OCI-LY7 (cell line): ENCODE measurements at regions of chr5 and their contacts with region 1.

Region 1: DNA sequence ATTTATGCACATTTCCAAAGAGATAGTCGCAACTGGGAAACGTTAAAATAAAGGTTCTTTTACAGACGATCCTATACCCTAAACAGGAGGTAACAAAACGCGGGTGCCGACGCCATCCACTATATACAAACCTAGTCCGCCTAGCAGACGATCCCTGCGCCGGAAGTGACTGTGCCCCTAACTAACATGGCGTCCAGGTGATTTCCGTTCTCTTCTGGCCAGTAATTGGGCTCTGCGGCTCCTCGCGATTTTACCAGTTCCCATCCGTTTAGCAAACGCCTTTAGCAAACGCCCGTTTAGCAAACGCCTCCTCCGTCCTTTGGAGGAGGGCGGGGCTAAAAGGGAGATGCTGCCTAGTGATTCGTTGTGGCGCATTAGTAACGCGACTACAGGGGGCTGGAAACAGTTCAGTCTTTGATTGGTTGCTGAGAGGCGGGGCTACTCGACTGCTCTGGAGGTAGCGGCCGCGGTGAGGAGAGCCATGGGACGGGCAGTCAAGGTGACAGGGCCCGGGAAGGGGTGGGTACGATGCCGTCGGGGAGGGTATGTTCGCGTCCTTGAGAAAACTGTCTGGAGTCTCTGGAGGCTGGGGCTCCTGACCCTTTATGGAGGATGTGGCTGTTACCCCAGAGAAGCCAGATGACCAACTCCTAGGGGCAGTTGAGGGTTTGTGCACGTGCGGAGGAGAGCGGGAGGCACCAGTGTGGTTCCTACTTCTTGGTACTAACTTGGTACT is at the start of gene LYRM7:
- DNase-seq: peak; percentile 100
- H3K4me3 ChIP-seq: peak within 1 kb of the TSS; percentile 79
- H3K27ac ChIP-seq: peak within 1 kb of the TSS; percentile 65
- H3K4me1 ChIP-seq: peaks cover 27% of the 10 kb centered on the region
- CTCF ChIP-seq: no peak
- total RNA-seq, gene LYRM7: 14.4 and 18.2 TPM in 2 replicates

Region 2: GRCh38 chr5:131209506-131210150 is 38.9 kb after region 1 on chr5:
- CTCF ChIA-PET with region 1: interaction called, 3 read pairs
- POLR2A ChIA-PET with region 1: interaction called, 6 read pairs
- intact Hi-C with region 1: loop called (anchors 1 kb)
- DNase-seq: peak; percentile 94
- H3K4me3 ChIP-seq: peak overlapping the region; percentile 68
- H3K27ac ChIP-seq: peak overlapping the region; percentile 96
- H3K4me1 ChIP-seq: peaks cover 67% of the 10 kb centered on the region
- CTCF ChIP-seq: no peak